ENCODE measurements at regions of chr13 and their contacts with region 1.

Region 1: GRCh38 chr13:79393564-79394249 is 12.3 kb downstream of the RBM26 start:
- DNase-seq: no peak
- ATAC-seq: peak; percentile 84
- H3K4me3 ChIP-seq: peak overlapping the region; percentile 32
- H3K27ac ChIP-seq: peak overlapping the region; percentile 29
- H3K4me1 ChIP-seq: peaks cover 25% of the 10 kb centered on the region
- H3K27me3 ChIP-seq: no peaks in the 10 kb centered on the region
- CTCF ChIP-seq: no peak
- EP300 ChIP-seq: 0 out of 4 replicates have a peak, but pooled peaks of 1 of the 2 experiments have one; percentile 13
- POLR2A ChIP-seq: 0 out of 2 replicates have a peak, but pooled peaks have one; percentile 25
- RAD21 ChIP-seq: no peak

Region 2: GRCh38 chr13:77724092-77724491 is 1669.6 kb before region 1 on chr13:
- CTCF ChIA-PET with region 1: no interaction called
- POLR2A ChIA-PET with region 1: no interaction called
- RAD21 ChIA-PET with region 1: no interaction called
- SMC1A ChIA-PET with region 1: no interaction called
- in situ Hi-C with region 1: loop called (anchors 25 kb)
- intact Hi-C with region 1: no loop called
- DNase-seq: peak; percentile 47
- ATAC-seq: peak; percentile 73
- H3K4me3 ChIP-seq: no peak overlapping the region
- H3K27ac ChIP-seq: no peak overlapping the region
- H3K4me1 ChIP-seq: peaks cover 4% of the 10 kb centered on the region; the same call in 1 of the 2 replicates
- H3K27me3 ChIP-seq: no peaks in the 10 kb centered on the region
- CTCF ChIP-seq: no peak
- EP300 ChIP-seq: no peak
- POLR2A ChIP-seq: no peak
- RAD21 ChIP-seq: no peak

Region 3: DNA sequence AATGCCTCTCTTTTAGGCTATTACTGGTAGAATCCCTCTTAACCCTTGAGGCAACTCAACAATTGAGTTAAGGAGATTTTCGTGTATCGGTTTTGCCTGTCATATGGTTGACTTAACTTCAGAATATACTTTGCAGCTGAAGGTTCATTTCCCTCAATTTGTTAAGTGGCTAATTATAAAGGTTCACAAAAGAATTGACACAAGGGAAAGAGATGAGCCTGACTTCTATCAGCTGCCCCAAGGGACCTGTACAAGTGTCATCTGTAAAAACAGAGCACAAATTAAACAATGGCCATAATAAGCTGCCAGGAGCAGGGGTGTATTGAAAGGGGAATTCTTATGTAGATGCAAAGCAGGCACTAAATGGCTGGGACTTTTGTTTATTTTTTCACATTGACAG is 399.9 kb before region 1 on chr13:
- CTCF ChIA-PET with region 1: interaction called, 3 read pairs
- POLR2A ChIA-PET with region 1: no interaction called
- RAD21 ChIA-PET with region 1: no interaction called
- SMC1A ChIA-PET with region 1: no interaction called
- in situ Hi-C with region 1: no loop called
- intact Hi-C with region 1: loop called (anchors 5 kb)
- DNase-seq: peak; percentile 21
- ATAC-seq: peak; percentile 76
- H3K4me3 ChIP-seq: no peak overlapping the region
- H3K27ac ChIP-seq: no peak overlapping the region
- H3K4me1 ChIP-seq: no peaks in the 10 kb centered on the region
- H3K27me3 ChIP-seq: no peaks in the 10 kb centered on the region
- CTCF ChIP-seq: no peak
- EP300 ChIP-seq: peak; percentile 75 to 79; a peak in 3 of 4 replicates
- POLR2A ChIP-seq: no peak
- RAD21 ChIP-seq: no peak

Region 4: GRCh38 chr13:79258489-79258888 is 135.2 kb before region 1 on chr13:
- CTCF ChIA-PET with region 1: no interaction called
- POLR2A ChIA-PET with region 1: no interaction called
- RAD21 ChIA-PET with region 1: no interaction called
- SMC1A ChIA-PET with region 1: no interaction called
- in situ Hi-C with region 1: no loop called
- intact Hi-C with region 1: no loop called
- DNase-seq: no peak
- ATAC-seq: peak; percentile 92
- H3K4me3 ChIP-seq: no peak overlapping the region
- H3K27ac ChIP-seq: no peak overlapping the region
- H3K4me1 ChIP-seq: no peaks in the 10 kb centered on the region
- H3K27me3 ChIP-seq: no peaks in the 10 kb centered on the region
- CTCF ChIP-seq: no peak
- EP300 ChIP-seq: no peak
- POLR2A ChIP-seq: no peak
- RAD21 ChIP-seq: no peak

Region 5: GRCh38 chr13:79340490-79340889 is 53.2 kb before region 1 on chr13:
- CTCF ChIA-PET with region 1: interaction called, 11 read pairs
- POLR2A ChIA-PET with region 1: interaction called, 3 read pairs
- RAD21 ChIA-PET with region 1: interaction called, 3 read pairs
- SMC1A ChIA-PET with region 1: interaction called, 3 read pairs
- in situ Hi-C with region 1: no loop called
- intact Hi-C with region 1: no loop called
- DNase-seq: no peak
- ATAC-seq: no peak
- H3K4me3 ChIP-seq: no peak overlapping the region
- H3K27ac ChIP-seq: no peak overlapping the region
- H3K4me1 ChIP-seq: no peaks in the 10 kb centered on the region
- H3K27me3 ChIP-seq: no peaks in the 10 kb centered on the region
- CTCF ChIP-seq: no peak
- EP300 ChIP-seq: no peak
- POLR2A ChIP-seq: no peak
- RAD21 ChIP-seq: no peak

Region 6: DNA sequence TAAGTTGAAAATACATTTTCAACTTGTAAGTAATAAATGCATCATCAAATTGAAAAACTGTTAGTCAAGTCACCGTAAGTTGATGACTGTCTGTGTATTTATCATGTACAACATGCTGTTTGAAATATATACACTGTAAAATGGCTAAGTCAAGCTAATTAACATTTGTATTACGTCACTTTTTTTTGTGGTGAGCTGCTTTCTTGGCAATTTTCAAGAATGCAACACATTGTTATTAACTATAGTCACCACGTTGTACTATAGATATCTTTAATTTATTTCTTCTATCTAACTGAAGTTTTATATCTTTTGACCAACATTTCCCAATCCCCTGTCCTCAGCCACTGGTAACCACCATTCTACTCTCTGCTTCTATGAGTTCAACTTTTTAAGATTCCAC is 44.7 kb before region 1 on chr13:
- CTCF ChIA-PET with region 1: interaction called, 15 read pairs
- POLR2A ChIA-PET with region 1: no interaction called
- RAD21 ChIA-PET with region 1: interaction called, 3 read pairs
- SMC1A ChIA-PET with region 1: interaction called, 9 read pairs
- in situ Hi-C with region 1: no loop called
- intact Hi-C with region 1: no loop called
- DNase-seq: no peak
- ATAC-seq: no peak
- H3K4me3 ChIP-seq: no peak overlapping the region
- H3K27ac ChIP-seq: no peak overlapping the region
- H3K4me1 ChIP-seq: no peaks in the 10 kb centered on the region
- H3K27me3 ChIP-seq: no peaks in the 10 kb centered on the region
- CTCF ChIP-seq: no peak
- EP300 ChIP-seq: no peak
- POLR2A ChIP-seq: no peak
- RAD21 ChIP-seq: no peak

Region 7: DNA sequence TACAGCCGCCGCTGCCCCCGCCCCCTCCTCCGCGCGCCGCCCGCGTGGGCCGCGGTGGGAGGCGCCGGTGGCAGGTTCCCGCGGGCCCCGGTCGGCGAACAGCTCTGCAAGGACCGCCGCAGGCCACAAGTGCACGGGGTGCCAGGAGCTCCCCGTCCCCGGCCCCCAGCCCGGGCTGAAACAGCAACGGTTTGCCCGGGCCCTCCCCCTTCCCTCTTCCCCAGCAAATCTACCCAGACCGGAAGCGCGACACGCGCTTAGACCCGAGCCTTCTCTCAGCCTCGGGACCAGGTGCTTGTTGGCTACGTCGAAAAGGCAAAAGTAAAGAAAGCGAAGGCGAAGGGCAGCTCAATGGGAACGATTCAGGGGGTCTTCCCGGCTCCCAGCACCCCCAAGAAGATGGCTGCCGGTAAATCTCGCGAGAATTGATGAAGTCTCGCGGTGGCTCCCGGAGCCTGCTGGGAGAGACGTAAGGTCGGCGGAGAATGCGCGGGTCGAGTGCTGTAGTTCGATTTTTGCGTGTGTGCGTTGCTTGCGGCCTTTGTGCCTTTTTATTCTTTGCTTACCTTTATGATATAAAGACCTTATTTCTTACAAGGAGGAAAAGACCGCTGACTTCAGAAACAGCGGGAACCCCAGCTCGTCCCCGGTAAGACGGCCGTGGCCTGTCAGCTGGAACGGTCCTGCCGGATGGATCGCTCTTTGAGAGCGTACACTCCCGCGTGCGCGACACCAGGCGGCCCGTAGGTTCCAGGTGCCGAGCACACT is 12.3 kb after region 1 on chr13 and contains the start of gene RBM26:
- CTCF ChIA-PET with region 1: interaction called, 32 read pairs
- POLR2A ChIA-PET with region 1: interaction called, 7 read pairs
- RAD21 ChIA-PET with region 1: interaction called, 14 read pairs
- SMC1A ChIA-PET with region 1: interaction called, 14 read pairs
- in situ Hi-C with region 1: no loop called
- intact Hi-C with region 1: no loop called
- DNase-seq: peak; percentile 76
- ATAC-seq: peak; percentile 73
- H3K4me3 ChIP-seq: peak within 1 kb of the TSS; percentile 99
- H3K27ac ChIP-seq: peak within 1 kb of the TSS; percentile 99
- H3K4me1 ChIP-seq: peaks cover 2% of the 10 kb centered on the region; the same call in 1 of the 2 replicates
- H3K27me3 ChIP-seq: no peaks in the 10 kb centered on the region
- CTCF ChIP-seq: no peak
- EP300 ChIP-seq: no peak
- POLR2A ChIP-seq: peak; percentile 95
- RAD21 ChIP-seq: no peak
- polyA plus RNA-seq, gene RBM26: 17.6 to 19.2 TPM

Region 8: GRCh38 chr13:79468819-79469218 is 75.1 kb after region 1 on chr13:
- CTCF ChIA-PET with region 1: no interaction called
- POLR2A ChIA-PET with region 1: no interaction called
- RAD21 ChIA-PET with region 1: no interaction called
- SMC1A ChIA-PET with region 1: no interaction called
- in situ Hi-C with region 1: no loop called
- intact Hi-C with region 1: no loop called
- DNase-seq: no peak
- ATAC-seq: peak; percentile 92
- H3K4me3 ChIP-seq: no peak overlapping the region
- H3K27ac ChIP-seq: no peak overlapping the region
- H3K4me1 ChIP-seq: peaks cover 6% of the 10 kb centered on the region; the same call in 1 of the 2 replicates
- H3K27me3 ChIP-seq: no peaks in the 10 kb centered on the region
- CTCF ChIP-seq: no peak
- EP300 ChIP-seq: no peak; a peak in 1 of 4 replicates
- POLR2A ChIP-seq: no peak
- RAD21 ChIP-seq: no peak